ENCODE measurements at regions of chr2 and their contacts with region 1.

Region 1: DNA sequence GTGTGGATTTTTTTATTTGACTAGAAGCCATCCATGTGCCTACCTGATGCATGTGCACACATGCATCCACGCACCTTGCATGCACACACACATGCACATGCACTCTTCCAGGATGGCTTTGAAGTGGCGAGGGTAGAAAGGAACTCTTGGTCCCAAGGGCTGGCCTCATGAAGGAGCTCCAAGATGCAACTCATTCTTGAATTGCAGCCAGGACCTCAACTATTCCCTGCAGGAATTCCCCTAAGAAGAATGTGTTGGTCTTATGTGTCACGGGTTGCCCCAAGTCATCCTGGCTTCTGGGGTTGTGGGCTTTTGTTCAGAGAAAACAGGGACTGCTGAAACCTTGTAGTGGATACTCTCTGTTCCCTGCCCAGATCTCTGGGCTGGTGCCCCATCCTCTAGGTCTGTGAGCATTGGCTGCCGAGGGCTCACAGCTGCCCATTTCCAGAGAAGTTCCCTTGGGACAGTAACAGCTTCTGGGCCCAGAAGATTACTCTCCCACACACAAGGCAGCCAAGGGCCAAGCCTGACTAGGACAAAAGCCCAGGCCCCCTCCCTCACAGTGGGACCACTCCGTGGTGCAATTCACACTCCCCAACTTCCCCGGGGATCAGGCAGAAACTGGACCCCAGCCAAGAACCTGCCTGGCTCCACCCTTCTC is 137.6 kb downstream of the COPS8 start:
- DNase-seq: peak in 3 of 5 donors; percentile 61 to 77 (median 74)
- ATAC-seq: peak in 3 of 4 donors; percentile 40 to 78 (median 67)
- H3K4me3 ChIP-seq: no peak overlapping the region
- H3K27ac ChIP-seq: peak overlapping the region in 9 of 12 donors; percentile 31 to 76 (median 43)
- H3K4me1 ChIP-seq: peaks cover 0 to 33% (median 6%) of the 10 kb centered on the region in 12 donors
- H3K27me3 ChIP-seq: no peaks in the 10 kb centered on the region
- CTCF ChIP-seq: no peak
- POLR2A ChIP-seq: no peak

Region 2: GRCh38 chr2:237280229-237280628 is 56.9 kb after region 1 on chr2:
- intact Hi-C with region 1: loop called in 1 of 10 experiments (anchors 2 kb)
- DNase-seq: peak in 2 of 5 donors; percentile 40 to 73
- ATAC-seq: peak in 3 of 4 donors; percentile 58 to 78 (median 69)
- H3K4me3 ChIP-seq: no peak overlapping the region
- H3K27ac ChIP-seq: peak overlapping the region in 10 of 12 donors; percentile 17 to 79 (median 65)
- H3K4me1 ChIP-seq: peaks cover 0 to 26% (median 0%) of the 10 kb centered on the region in 12 donors
- H3K27me3 ChIP-seq: no peaks in the 10 kb centered on the region
- CTCF ChIP-seq: no peak
- POLR2A ChIP-seq: no peak

Region 3: GRCh38 chr2:237330541-237330940 is 107.2 kb after region 1 on chr2:
- intact Hi-C with region 1: loop called in 1 of 10 experiments (anchors 5 kb)
- DNase-seq: no peak
- ATAC-seq: no peak
- H3K4me3 ChIP-seq: no peak overlapping the region
- H3K27ac ChIP-seq: peak overlapping the region in 1 of 12 donors; percentile 92
- H3K4me1 ChIP-seq: peaks cover 0 to 29% (median 1%) of the 10 kb centered on the region in 12 donors
- H3K27me3 ChIP-seq: no peaks in the 10 kb centered on the region
- CTCF ChIP-seq: no peak
- POLR2A ChIP-seq: no peak

Region 4: GRCh38 chr2:237702441-237703391 is 479.4 kb after region 1 on chr2:
- intact Hi-C with region 1: no loop called
- DNase-seq: peak; percentile 61 to 80 (median 70)
- ATAC-seq: peak; percentile 52 to 69 (median 58)
- H3K4me3 ChIP-seq: peak overlapping the region in 9 of 12 donors; percentile 5 to 34 (median 21)
- H3K27ac ChIP-seq: peak overlapping the region; percentile 56 to 98 (median 84)
- H3K4me1 ChIP-seq: peaks cover 57 to 100% (median 98%) of the 10 kb centered on the region in 12 donors
- H3K27me3 ChIP-seq: no peaks in the 10 kb centered on the region
- CTCF ChIP-seq: no peak
- POLR2A ChIP-seq: no peak